BJ (cell line): ENCODE measurements at regions of chr9 and their contacts with region 1.

Region 1: GRCh38 chr9:99796231-99796630 is 25.5 kb upstream of the NR4A3 start:
- DNase-seq: no peak
- H3K4me3 ChIP-seq: no peak overlapping the region
- H3K27me3 ChIP-seq: no peaks in the 10 kb centered on the region
- CTCF ChIP-seq: no peak

Region 2: DNA sequence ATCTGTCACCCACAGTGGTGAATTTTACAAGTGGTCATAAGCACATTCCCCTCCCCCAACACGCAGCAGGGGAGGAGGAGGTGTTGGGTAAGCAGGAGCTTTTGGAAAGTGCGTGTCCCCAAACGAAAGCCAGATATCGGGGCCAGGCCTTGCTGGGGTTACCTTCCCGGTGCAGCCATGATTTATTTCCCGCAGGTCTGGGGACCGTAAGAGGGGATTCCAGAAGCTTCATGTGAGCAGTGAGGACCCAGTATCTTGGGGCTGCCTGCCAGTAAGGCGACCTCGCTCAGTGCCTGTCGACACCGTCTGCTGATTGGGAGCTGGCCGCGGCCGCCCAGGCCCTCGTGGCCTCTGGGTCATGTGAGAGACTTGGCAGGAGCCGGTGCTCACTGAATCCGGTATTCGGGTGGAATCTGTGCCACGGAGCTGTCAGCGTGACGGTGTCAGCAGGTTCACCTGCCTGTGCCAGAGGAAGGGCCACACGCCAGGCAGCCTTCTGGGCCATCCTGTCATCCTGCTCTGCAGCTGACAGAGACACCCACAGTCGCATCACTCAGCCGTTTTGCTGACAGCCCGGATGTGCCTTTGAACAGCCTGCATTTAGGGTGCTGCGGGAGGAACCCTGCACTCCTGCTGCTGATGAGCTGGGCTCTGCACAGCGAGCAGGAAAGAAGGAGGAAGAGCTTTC is 536.9 kb before region 1 on chr9:
- CTCF ChIA-PET with region 1: no interaction called
- POLR2A ChIA-PET with region 1: interaction called, 10 read pairs
- DNase-seq: no peak
- H3K4me3 ChIP-seq: no peak overlapping the region
- H3K27me3 ChIP-seq: no peaks in the 10 kb centered on the region
- CTCF ChIP-seq: no peak